ENCODE measurements at regions of chr1 and their contacts with region 1.

Region 1: DNA sequence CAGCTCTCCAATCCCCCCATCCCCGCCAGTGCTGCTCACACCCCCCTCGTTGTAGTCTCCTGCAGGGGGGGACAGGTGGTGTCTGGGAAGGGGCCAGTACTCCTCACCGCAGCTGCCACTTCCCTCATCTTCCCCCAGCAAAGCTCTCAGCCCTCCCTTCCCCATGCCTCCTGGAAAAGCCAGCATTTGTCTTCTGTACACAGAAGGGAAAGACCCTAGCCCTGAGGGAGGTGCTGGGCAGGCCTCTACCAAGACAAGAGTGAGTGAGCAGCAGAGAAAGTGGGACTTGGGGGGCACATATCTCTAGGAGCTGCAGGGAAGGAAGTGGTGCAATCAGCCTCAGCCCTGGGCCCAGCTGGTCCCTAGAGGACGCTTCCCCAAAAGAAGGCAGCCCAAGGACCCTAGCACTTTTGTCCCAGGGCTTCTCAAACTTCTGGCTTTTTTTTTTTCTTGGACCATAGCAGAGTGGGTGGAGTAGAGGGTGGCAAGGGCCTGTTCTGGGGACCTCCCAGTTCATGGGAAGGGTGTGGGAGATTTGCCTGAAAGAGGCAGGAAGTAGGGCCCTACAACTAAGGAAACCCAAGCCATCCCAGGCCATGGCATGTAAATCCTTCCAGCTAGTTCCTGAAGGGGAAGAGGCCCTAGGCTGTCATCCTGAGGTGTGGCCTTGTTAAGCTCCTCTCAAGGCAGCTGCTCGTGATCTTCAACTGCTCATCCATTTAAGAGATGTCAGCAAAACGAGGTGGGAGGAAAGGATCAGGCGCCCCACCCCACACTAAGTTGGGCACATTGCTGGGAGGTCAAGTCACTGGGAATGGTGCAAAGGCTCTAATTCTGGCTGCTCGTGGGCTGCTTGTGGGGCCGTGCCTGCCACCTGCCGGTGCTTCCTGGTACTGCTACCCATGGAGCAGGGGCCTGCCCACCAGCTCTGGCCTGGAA is 12.6 kb downstream of the ZC3H12A start:
- DNase-seq: peak; percentile 69 to 79
- ATAC-seq: peak; percentile 44 to 67
- H3K4me3 ChIP-seq: no peak overlapping the region
- H3K27ac ChIP-seq: peak overlapping the region; percentile 90 to 100
- H3K4me1 ChIP-seq: peaks cover 57% of the 10 kb centered on the region
- CTCF ChIP-seq: peak; percentile 69
- EP300 ChIP-seq: no peak
- POLR2A ChIP-seq: no peak
- RAD21 ChIP-seq: peak; percentile 73 to 77

Region 2: GRCh38 chr1:37458528-37458927 is 28.4 kb before region 1 on chr1:
- CTCF ChIA-PET with region 1: interaction called, 208 read pairs
- POLR2A ChIA-PET with region 1: interaction called, 4 read pairs
- DNase-seq: peak in 1 of 2 experiments; percentile 20
- ATAC-seq: no peak
- H3K4me3 ChIP-seq: no peak overlapping the region
- H3K27ac ChIP-seq: peak overlapping the region; percentile 55 to 63; a peak in 5 of 6 replicates
- H3K4me1 ChIP-seq: peaks cover 54% of the 10 kb centered on the region
- CTCF ChIP-seq: no peak
- EP300 ChIP-seq: no peak
- POLR2A ChIP-seq: no peak
- RAD21 ChIP-seq: no peak

Region 3: GRCh38 chr1:37474046-37474759 is 12.7 kb before region 1 on chr1 and contains the start of gene ZC3H12A:
- CTCF ChIA-PET with region 1: interaction called, 143 read pairs
- POLR2A ChIA-PET with region 1: interaction called, 20 read pairs
- DNase-seq: peak; percentile 58 to 83
- ATAC-seq: peak; percentile 41 to 44
- H3K4me3 ChIP-seq: peak within 1 kb of the TSS; percentile 85
- H3K27ac ChIP-seq: peak within 1 kb of the TSS; percentile 88 to 100
- H3K4me1 ChIP-seq: peaks cover 47% of the 10 kb centered on the region
- CTCF ChIP-seq: no peak; the same call in 2 of the 3 replicates
- EP300 ChIP-seq: no peak
- POLR2A ChIP-seq: peak; percentile 91
- RAD21 ChIP-seq: no peak
- polyA plus RNA-seq, gene ZC3H12A: 23.1 and 23.5 TPM in 2 replicates

Region 4: GRCh38 chr1:37509181-37509580 is 22.2 kb after region 1 on chr1:
- CTCF ChIA-PET with region 1: interaction called, 29 read pairs
- POLR2A ChIA-PET with region 1: interaction called, 7 read pairs
- DNase-seq: peak in 1 of 2 experiments; percentile 30
- ATAC-seq: peak; percentile 74 to 86; a peak in 4 of 6 replicates
- H3K4me3 ChIP-seq: no peak overlapping the region
- H3K27ac ChIP-seq: no peak overlapping the region
- H3K4me1 ChIP-seq: peaks cover 6% of the 10 kb centered on the region; the same call in 1 of the 3 replicates
- CTCF ChIP-seq: peak; percentile 20; the same call in 1 of the 3 replicates
- EP300 ChIP-seq: no peak
- POLR2A ChIP-seq: no peak
- RAD21 ChIP-seq: no peak